ENCODE measurements at regions of chrX and their contacts with region 1.

Region 1: GRCh38 chrX:133415276-133416105 is at the start of gene GPC4:
- H3K4me3 ChIP-seq: peak within 1 kb of the TSS; percentile 77
- H3K27ac ChIP-seq: peak within 1 kb of the TSS; percentile 78; the same call in 1 of the 2 replicates
- H3K4me1 ChIP-seq: peaks cover 3% of the 10 kb centered on the region
- CTCF ChIP-seq: peak; percentile 35; the same call in 1 of the 2 replicates

Region 2: DNA sequence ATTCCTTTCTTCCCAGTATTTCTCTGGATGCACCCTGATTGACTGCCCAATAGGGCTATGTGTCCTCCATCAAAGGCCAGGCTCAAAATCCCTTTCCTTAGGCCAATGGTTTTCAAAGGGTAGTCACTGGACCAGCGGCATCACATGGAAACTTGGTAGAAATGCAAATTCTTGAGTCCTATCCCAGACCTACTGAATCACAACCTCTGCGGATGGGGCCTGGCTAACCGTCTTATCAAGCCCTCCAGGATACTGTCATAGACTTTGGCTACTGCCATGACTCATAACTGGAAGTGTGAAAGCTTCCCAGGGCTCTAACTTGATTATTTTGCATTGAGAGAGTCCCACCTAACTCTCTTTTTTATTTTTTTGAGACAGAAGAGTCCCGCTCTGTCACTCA is 125.4 kb before region 1 on chrX:
- CTCF ChIA-PET with region 1: no interaction called
- POLR2A ChIA-PET with region 1: no interaction called
- H3K4me3 ChIP-seq: no peak overlapping the region
- H3K27ac ChIP-seq: no peak overlapping the region
- H3K4me1 ChIP-seq: no peaks in the 10 kb centered on the region
- CTCF ChIP-seq: no peak

Region 3: GRCh38 chrX:133402042-133402453 is 13.4 kb before region 1 on chrX:
- CTCF ChIA-PET with region 1: no interaction called
- POLR2A ChIA-PET with region 1: no interaction called
- H3K4me3 ChIP-seq: no peak overlapping the region
- H3K27ac ChIP-seq: no peak overlapping the region
- H3K4me1 ChIP-seq: peaks cover 3% of the 10 kb centered on the region
- CTCF ChIP-seq: no peak

Region 4: GRCh38 chrX:133444951-133445831 is 29.7 kb after region 1 on chrX:
- CTCF ChIA-PET with region 1: interaction called, 3 read pairs
- POLR2A ChIA-PET with region 1: interaction called, 12 read pairs
- H3K4me3 ChIP-seq: peak overlapping the region; percentile 22
- H3K27ac ChIP-seq: no peak overlapping the region
- H3K4me1 ChIP-seq: no peaks in the 10 kb centered on the region
- CTCF ChIP-seq: no peak

Region 5: DNA sequence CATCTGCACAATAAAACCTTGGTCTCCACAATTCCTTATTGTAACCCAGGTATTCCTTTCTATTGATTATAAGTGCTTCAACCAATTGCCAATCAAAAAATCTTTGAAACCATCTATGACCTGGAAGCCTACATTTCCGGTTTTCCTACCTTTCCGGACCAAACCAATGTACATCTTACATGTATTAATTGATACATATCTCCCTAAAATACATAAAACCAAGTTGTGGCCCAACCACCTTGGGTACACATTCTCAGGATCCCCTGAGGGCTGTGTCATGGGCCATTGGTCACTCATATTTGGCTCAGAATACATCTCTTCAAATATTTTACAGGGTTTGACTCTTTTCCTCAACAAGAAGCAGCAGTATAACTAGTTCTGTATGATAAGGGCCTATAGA is 205.2 kb after region 1 on chrX:
- CTCF ChIA-PET with region 1: no interaction called
- POLR2A ChIA-PET with region 1: no interaction called
- H3K4me3 ChIP-seq: no peak overlapping the region
- H3K27ac ChIP-seq: no peak overlapping the region
- H3K4me1 ChIP-seq: no peaks in the 10 kb centered on the region
- CTCF ChIP-seq: no peak

Measured in HEK293 (cell line).